Esophagus squamous epithelium (tissue), 5 donors: ENCODE measurements at regions of chrX and their contacts with region 1.

Region 1: DNA sequence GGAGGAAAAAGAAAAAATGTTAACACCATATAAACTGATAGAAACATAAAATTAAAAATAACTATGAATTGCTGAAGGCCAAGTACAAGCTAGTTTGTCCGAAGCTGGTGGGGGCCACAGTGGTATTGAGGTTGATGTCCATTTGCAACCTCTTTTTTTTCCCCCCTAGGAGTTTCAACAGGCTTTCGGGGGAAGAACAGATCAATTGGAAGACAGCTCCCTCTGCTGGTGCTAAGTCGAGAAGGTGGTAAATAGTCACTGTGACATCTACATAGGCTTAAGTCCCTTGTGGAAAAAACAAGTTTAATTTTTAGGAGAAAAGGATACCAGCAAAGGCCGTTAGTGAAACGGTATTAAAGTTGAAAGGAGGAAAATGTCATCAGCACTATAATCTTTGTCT is 115.7 kb upstream of the ZXDA start:
- DNase-seq: no peak
- H3K4me3 ChIP-seq: no peak overlapping the region
- H3K27ac ChIP-seq: no peak overlapping the region
- H3K4me1 ChIP-seq: no peaks in the 10 kb centered on the region
- H3K27me3 ChIP-seq: no peaks in the 10 kb centered on the region
- CTCF ChIP-seq: peak in 3 of 6 experiments; percentile 21 to 47 (median 26)
- POLR2A ChIP-seq: no peak

Region 2: DNA sequence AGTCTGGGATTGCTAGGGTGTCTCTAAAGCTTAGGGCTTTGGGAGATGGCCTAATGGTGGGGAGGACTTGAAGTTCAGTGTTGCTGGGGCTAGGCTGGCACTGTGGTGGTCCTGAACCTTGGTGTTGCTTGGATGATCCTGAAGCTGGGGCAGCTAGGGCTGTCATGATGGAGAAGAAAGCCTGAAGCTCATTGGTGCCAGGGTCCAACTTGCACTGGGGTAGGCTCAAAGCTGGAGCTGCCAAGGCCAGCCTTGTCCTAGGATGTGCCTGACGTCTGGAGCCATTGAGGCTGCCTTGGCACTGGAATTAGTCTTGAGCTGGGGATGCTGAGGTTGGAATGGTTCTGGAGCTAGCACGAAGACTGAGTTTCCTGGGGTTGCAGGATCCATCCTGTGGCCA is 284.9 kb before region 1 on chrX:
- intact Hi-C with region 1: no loop called
- DNase-seq: no peak
- H3K4me3 ChIP-seq: no peak overlapping the region
- H3K27ac ChIP-seq: no peak overlapping the region
- H3K4me1 ChIP-seq: no peaks in the 10 kb centered on the region
- H3K27me3 ChIP-seq: no peaks in the 10 kb centered on the region
- CTCF ChIP-seq: no peak
- POLR2A ChIP-seq: no peak

Region 3: DNA sequence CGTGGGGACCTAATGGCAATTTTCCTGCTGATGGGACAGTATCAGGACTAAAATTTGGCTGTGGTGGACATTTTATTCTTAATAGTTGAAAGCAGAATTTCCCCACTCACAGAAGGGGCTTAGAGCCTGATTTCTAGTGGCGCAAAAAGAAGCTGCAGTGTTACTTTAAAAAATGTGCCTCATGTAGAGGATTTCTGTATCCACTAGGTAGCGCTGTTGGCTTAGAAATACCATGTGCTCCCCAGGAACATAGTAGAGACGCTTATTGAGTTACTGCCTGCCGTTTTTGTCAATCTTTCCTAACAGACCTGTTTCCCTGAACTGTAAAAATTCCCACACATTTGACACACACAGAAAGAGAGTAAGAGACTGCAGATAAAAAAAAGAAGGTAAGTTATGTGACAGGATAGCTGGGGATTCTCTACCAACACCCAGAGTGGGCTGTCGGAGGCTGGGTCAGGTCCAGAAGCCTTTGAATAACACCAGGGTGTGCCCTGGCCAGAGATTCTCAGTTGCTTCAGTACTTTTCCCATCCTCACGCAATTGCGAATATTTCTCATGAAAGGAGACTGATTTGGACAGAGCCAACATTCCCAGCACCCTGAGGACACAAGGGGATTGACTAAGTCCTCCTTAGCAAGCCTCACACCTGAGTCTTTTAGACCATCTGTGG is 204.1 kb before region 1 on chrX:
- intact Hi-C with region 1: loop called (anchors 10 kb)
- DNase-seq: no peak
- H3K4me3 ChIP-seq: peak overlapping the region in 1 of 4 donors; percentile 25
- H3K27ac ChIP-seq: no peak overlapping the region
- H3K4me1 ChIP-seq: peaks cover 0 to 3% (median 0%) of the 10 kb centered on the region in 3 donors
- H3K27me3 ChIP-seq: no peaks in the 10 kb centered on the region
- CTCF ChIP-seq: peak; percentile 49 to 63 (median 57)
- POLR2A ChIP-seq: no peak